GM12878 (cell line): ENCODE measurements at regions of chr11 and their contacts with region 1.

Region 1: DNA sequence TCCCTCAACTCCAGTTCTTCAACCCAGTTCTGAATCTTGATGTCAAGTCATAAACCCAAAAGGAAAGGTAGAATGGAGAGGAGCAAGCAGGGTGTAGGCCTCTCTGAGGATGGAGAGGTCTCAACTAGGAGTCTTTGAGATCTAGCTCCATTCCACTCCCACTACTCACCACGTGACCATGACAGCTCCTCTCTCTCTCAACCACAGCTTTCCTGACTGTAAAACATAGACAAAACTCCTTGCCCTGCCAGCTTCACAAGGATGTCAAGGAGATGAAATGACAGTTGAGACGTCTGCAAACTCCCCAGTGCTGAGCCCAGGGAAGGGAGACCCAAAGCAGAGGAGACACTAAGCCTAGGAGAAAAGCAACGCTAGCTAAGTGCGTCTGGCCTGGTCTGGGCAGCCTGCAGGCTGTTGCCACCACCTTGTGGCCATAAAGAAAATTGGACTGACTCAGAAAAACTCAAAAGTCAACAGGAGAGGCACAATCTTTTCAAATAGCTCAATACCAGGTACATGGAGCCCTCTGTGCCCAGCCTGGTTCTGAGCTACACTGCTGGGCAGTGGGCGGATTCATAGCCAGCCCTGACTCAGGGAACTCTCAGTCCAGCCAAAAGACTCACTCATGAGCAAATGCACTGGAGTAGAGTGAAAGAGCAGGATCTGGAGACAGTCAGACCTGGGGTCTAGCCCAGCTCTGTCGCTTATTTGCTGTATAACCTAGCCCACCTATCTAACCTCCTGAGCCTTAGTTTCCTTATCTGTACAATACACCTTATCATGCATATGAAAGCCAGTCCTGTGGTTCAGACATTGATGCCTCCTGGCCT is 3.4 kb downstream of the CLPB start:
- DNase-seq: no peak
- ATAC-seq: peak; percentile 63
- H3K4me3 ChIP-seq: no peak overlapping the region
- H3K27ac ChIP-seq: peak overlapping the region; percentile 24; the same call in 1 of the 2 replicates
- H3K4me1 ChIP-seq: peaks cover 12% of the 10 kb centered on the region
- H3K27me3 ChIP-seq: no peaks in the 10 kb centered on the region
- CTCF ChIP-seq: peak; percentile 79 to 94 (median 92)
- EP300 ChIP-seq: no peak
- POLR2A ChIP-seq: no peak
- RAD21 ChIP-seq: peak; percentile 89

Region 2: GRCh38 chr11:72024069-72024754 is 406.7 kb before region 1 on chr11:
- CTCF ChIA-PET with region 1: interaction called, 30 read pairs
- POLR2A ChIA-PET with region 1: no interaction called
- RAD21 ChIA-PET with region 1: interaction called, 26 read pairs
- SMC1A ChIA-PET with region 1: interaction called, 20 read pairs
- in situ Hi-C with region 1: loop called (anchors 5 kb)
- intact Hi-C with region 1: loop called (anchors 5 kb)
- DNase-seq: no peak
- ATAC-seq: no peak
- H3K4me3 ChIP-seq: no peak overlapping the region
- H3K27ac ChIP-seq: no peak overlapping the region
- H3K4me1 ChIP-seq: no peaks in the 10 kb centered on the region
- H3K27me3 ChIP-seq: no peaks in the 10 kb centered on the region
- CTCF ChIP-seq: no peak
- EP300 ChIP-seq: no peak
- POLR2A ChIP-seq: no peak
- RAD21 ChIP-seq: no peak

Region 3: DNA sequence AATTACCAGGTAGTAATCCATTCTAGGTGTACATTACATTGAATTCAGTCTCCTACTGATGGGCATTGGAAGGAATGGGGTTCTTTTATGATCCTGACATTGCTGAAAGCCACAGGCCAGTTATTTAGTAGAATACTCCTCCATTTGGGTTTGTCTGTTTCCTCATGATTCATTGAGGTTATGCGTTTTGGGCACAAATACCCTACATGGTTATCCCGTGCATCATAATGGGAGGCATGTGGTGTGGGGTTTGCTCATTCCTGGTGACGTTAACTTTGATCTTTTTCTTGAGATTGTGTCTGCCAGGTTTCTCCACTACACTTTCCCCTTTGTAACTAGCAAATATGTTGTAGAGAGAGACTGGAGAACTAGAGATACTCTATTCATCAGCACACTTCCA is 289.9 kb before region 1 on chr11:
- CTCF ChIA-PET with region 1: interaction called, 34 read pairs
- POLR2A ChIA-PET with region 1: interaction called, 3 read pairs
- RAD21 ChIA-PET with region 1: interaction called, 26 read pairs
- SMC1A ChIA-PET with region 1: interaction called, 9 read pairs
- in situ Hi-C with region 1: no loop called
- intact Hi-C with region 1: loop called (anchors 5 kb)
- DNase-seq: no peak
- ATAC-seq: no peak
- H3K4me3 ChIP-seq: no peak overlapping the region
- H3K27ac ChIP-seq: no peak overlapping the region
- H3K4me1 ChIP-seq: no peaks in the 10 kb centered on the region
- H3K27me3 ChIP-seq: no peaks in the 10 kb centered on the region; a peak in 1 of 4 replicates
- CTCF ChIP-seq: no peak
- EP300 ChIP-seq: no peak
- POLR2A ChIP-seq: no peak
- RAD21 ChIP-seq: no peak

Region 4: DNA sequence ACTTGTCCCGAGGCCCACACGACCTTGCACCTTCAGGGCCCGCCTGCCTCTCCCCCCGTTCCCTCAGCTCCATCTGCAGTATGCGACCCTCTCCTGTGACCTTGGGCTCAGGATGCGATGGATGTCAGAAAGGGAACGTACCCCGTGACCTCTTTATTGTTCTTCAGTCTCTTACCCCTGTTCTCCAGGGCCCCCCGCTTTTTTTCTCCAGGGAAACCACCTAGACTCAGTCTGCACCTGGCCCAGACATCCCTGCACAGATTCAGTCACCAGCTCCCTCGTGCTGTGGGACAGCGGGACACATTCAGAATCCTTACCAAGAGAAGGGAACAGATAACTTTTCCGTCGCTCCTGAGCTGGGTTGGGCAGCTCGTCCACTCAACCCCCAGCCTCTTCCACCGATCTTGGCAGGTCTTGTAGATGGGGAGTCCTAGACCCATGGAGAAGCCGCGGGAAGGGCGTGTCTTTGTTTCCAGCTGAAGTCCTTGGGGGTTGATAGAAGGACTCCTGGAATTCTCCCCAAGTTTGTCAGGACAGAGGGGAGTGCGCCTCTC is 185.6 kb before region 1 on chr11:
- CTCF ChIA-PET with region 1: interaction called, 10 read pairs
- POLR2A ChIA-PET with region 1: no interaction called
- RAD21 ChIA-PET with region 1: no interaction called
- SMC1A ChIA-PET with region 1: interaction called, 7 read pairs
- in situ Hi-C with region 1: no loop called
- intact Hi-C with region 1: no loop called
- DNase-seq: no peak
- ATAC-seq: no peak
- H3K4me3 ChIP-seq: no peak overlapping the region
- H3K27ac ChIP-seq: no peak overlapping the region
- H3K4me1 ChIP-seq: no peaks in the 10 kb centered on the region
- H3K27me3 ChIP-seq: peaks cover 9 to 24% of the 10 kb centered on the region in 2 experiments; a peak in 3 of 4 replicates
- CTCF ChIP-seq: no peak
- EP300 ChIP-seq: no peak
- POLR2A ChIP-seq: no peak
- RAD21 ChIP-seq: no peak

Region 5: DNA sequence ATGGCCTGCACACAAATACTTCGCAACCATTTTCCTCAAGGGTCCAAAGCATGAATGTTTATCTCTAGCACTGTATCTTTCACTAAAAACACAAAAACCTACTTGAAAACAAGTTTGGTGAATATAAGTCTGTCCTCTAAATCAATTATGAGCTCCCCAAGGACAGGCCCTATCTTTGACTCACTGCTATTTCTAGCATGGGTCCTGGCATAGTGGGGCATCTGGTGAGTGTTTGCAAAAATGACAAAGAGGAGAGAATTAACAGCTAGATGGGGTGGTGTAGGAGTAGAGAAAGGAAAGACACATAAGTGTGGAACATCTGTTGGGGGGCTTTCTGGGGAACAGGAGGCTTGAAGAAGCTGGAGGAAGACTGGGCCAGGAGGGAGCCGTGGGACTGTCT is 113.0 kb before region 1 on chr11:
- CTCF ChIA-PET with region 1: interaction called, 12 read pairs
- POLR2A ChIA-PET with region 1: no interaction called
- RAD21 ChIA-PET with region 1: interaction called, 6 read pairs
- SMC1A ChIA-PET with region 1: interaction called, 4 read pairs
- in situ Hi-C with region 1: no loop called
- intact Hi-C with region 1: no loop called
- DNase-seq: no peak
- ATAC-seq: no peak
- H3K4me3 ChIP-seq: no peak overlapping the region
- H3K27ac ChIP-seq: no peak overlapping the region
- H3K4me1 ChIP-seq: no peaks in the 10 kb centered on the region
- H3K27me3 ChIP-seq: no peaks in the 10 kb centered on the region
- CTCF ChIP-seq: no peak
- EP300 ChIP-seq: no peak
- POLR2A ChIP-seq: no peak
- RAD21 ChIP-seq: no peak

Region 6: GRCh38 chr11:72405009-72405408 is 25.9 kb before region 1 on chr11:
- CTCF ChIA-PET with region 1: interaction called, 378 read pairs
- POLR2A ChIA-PET with region 1: no interaction called
- RAD21 ChIA-PET with region 1: interaction called, 22 read pairs
- SMC1A ChIA-PET with region 1: interaction called, 19 read pairs
- in situ Hi-C with region 1: no loop called
- intact Hi-C with region 1: no loop called
- DNase-seq: no peak
- ATAC-seq: no peak
- H3K4me3 ChIP-seq: no peak overlapping the region
- H3K27ac ChIP-seq: no peak overlapping the region
- H3K4me1 ChIP-seq: no peaks in the 10 kb centered on the region
- H3K27me3 ChIP-seq: no peaks in the 10 kb centered on the region
- CTCF ChIP-seq: no peak
- EP300 ChIP-seq: no peak
- POLR2A ChIP-seq: no peak
- RAD21 ChIP-seq: no peak

Region 7: GRCh38 chr11:72561856-72562255 is 130.9 kb after region 1 on chr11:
- CTCF ChIA-PET with region 1: no interaction called
- POLR2A ChIA-PET with region 1: no interaction called
- RAD21 ChIA-PET with region 1: no interaction called
- SMC1A ChIA-PET with region 1: no interaction called
- in situ Hi-C with region 1: no loop called
- intact Hi-C with region 1: no loop called
- DNase-seq: no peak
- ATAC-seq: no peak
- H3K4me3 ChIP-seq: no peak overlapping the region
- H3K27ac ChIP-seq: no peak overlapping the region
- H3K4me1 ChIP-seq: no peaks in the 10 kb centered on the region
- H3K27me3 ChIP-seq: peaks cover 0 to 1% of the 10 kb centered on the region in 2 experiments; a peak in 2 of 4 replicates
- CTCF ChIP-seq: no peak
- EP300 ChIP-seq: no peak
- POLR2A ChIP-seq: no peak
- RAD21 ChIP-seq: no peak

Region 8: GRCh38 chr11:72589802-72590761 is 159.1 kb after region 1 on chr11:
- CTCF ChIA-PET with region 1: no interaction called
- POLR2A ChIA-PET with region 1: no interaction called
- RAD21 ChIA-PET with region 1: no interaction called
- SMC1A ChIA-PET with region 1: no interaction called
- in situ Hi-C with region 1: no loop called
- intact Hi-C with region 1: no loop called
- DNase-seq: no peak
- ATAC-seq: peak; percentile 40
- H3K4me3 ChIP-seq: no peak overlapping the region
- H3K27ac ChIP-seq: no peak overlapping the region
- H3K4me1 ChIP-seq: no peaks in the 10 kb centered on the region; the same call in 1 of the 2 replicates
- H3K27me3 ChIP-seq: peaks cover 15 to 17% of the 10 kb centered on the region in 2 experiments
- CTCF ChIP-seq: peak; percentile 44 to 48 (median 47)
- EP300 ChIP-seq: no peak
- POLR2A ChIP-seq: no peak
- RAD21 ChIP-seq: peak; percentile 49

Region 9: DNA sequence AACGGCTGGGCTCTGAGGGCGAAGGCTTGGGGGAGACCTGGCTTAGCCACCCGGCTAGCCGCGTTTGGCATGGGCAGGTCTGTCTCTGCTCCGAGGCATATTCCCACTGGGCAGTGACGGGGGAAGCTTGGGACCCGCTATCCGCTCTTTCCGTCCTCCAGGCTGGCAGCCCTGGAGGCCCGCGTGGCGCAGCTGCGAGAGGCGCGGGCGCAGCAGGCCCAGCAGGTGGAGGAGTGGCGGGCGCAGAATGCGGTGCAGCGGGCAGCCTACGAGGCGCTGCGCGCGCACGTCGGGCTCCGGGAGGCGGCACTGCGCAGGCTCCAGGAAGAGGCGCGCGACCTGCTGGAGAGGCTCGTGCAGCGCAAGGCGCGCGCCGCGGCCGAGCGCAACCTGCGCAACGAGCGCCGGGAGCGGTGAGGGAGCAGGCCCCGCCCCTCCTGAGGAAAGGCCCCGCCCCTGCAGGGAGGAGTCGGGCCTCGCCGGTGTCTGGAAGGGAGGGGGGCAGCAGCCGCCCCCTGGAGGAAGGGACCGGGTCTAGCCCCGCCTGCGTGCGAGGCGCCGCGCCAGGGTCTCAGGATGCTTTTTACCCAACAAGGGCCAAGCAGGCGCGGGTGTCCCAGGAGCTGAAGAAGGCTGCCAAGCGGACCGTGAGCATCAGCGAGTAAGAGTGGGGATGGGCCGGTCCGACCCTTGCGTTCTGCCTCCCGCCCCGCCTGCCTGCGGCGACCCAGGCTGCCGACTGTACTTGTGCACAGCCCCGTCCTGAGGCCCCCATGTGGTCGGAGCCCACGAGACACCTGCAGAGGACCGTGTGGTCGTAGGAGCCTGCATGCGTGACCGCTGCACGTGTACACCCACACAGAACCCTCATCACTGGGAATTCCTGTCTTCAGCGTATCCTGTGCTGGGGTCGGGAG is 391.2 kb after region 1 on chr11:
- CTCF ChIA-PET with region 1: no interaction called
- POLR2A ChIA-PET with region 1: no interaction called
- RAD21 ChIA-PET with region 1: no interaction called
- SMC1A ChIA-PET with region 1: no interaction called
- in situ Hi-C with region 1: no loop called
- intact Hi-C with region 1: no loop called
- DNase-seq: peak; percentile 21
- ATAC-seq: peak; percentile 82
- H3K4me3 ChIP-seq: peak overlapping the region; percentile 52; the same call in 1 of the 2 replicates
- H3K27ac ChIP-seq: peak overlapping the region; percentile 17
- H3K4me1 ChIP-seq: peaks cover 19% of the 10 kb centered on the region
- H3K27me3 ChIP-seq: no peaks in the 10 kb centered on the region
- CTCF ChIP-seq: 0 out of 6 replicates have a peak, but pooled peaks of 2 of the 3 experiments have one; percentile 9 to 10
- EP300 ChIP-seq: no peak
- POLR2A ChIP-seq: peak; percentile 68
- RAD21 ChIP-seq: 0 out of 2 replicates have a peak, but pooled peaks have one; percentile 11